ENCODE measurements at regions of chr16 and their contacts with region 1.

Region 1: DNA sequence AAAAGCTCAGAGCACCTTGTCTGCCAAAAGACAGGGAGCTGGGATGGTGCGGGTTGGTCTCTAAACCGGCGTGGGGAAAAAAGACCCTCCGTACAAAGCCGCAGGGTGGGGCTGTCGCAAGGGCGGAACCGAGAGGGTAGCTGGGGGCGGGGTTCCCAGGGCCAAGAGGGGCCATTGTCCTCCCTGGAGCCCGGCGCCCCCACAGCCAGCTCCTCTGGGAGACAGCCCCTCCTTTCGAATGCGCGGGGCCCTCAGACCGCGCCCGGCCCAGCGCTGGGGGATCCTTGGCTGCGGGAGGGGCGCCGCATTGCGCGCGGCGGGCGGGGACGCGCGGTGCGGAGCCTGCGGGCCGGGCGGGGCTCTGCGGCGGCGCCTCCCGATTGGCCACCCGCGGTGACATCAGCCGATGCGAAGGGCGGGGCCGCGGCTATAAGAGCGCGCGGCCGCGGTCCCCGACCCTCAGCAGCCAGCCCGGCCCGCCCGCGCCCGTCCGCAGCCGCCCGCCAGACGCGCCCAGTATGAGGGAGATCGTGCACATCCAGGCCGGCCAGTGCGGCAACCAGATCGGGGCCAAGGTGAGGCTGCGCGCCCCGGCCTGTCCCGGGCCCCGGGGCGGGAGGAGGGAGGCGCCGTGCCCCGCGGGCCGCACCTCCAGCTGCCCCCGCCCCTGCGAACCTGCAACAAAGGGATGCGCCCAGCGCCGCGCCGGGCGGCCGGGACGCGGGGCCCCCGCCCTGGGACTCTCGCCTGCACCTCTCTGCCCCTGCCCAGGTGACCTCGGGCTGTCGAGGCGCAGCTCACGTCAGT is at the start of gene TUBB3:
- DNase-seq: peak; percentile 83
- H3K4me3 ChIP-seq: peak within 1 kb of the TSS; percentile 75 to 84 (median 79)
- H3K27ac ChIP-seq: peak within 1 kb of the TSS; percentile 99
- H3K4me1 ChIP-seq: peaks cover 34% of the 10 kb centered on the region
- H3K27me3 ChIP-seq: no peaks in the 10 kb centered on the region
- CTCF ChIP-seq: no peak
- POLR2A ChIP-seq: peak; percentile 99
- total RNA-seq, gene TUBB3: 164 and 215 TPM in 2 replicates

Region 2: DNA sequence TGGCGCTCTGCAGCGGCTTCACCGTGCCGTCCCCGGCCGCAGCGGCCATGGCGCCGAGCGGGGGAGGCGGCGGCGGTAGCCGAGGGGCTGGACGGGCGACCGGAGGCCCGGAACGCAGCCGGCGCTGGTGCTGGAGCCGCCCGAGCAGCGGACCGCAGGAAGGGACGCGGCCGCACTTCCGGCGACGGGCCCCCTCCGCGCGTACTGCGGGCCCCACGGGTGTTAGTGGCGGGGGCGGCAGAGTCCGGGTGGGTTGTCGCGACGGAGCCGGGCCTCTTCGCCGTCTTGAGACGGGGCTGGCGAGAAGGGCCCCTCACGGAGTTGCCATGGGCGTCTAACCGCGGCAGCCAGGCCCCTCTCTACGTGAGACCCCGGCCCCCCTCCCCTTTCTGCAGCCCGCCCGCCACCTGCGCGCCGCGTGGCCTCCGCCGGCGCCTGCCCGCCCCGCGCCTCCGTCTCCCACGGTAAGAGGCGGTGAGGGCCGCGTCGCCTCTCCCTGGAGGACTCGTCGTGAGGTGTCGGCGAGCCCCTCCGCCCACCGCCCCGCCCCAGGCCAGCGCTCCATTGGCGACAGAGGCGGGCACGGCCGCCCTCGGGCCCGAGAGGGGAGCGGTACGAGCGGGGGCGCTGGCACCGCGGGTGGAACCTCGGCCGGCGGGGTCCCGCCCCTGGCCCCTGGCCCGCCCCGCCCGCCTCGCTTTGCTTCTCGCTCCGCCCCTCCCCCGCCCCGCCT is 202.1 kb before region 1 on chr16 and contains the starts of genes VPS9D1 and ZNF276:
- CTCF ChIA-PET with region 1: no interaction called
- POLR2A ChIA-PET with region 1: no interaction called
- dilution Hi-C with region 1: no loop called
- intact Hi-C with region 1: loop called (anchors 5 kb)
- DNase-seq: peak; percentile 79
- H3K4me3 ChIP-seq: peak within 1 kb of the TSS; percentile 57 to 76 (median 63)
- H3K27ac ChIP-seq: peak within 1 kb of the TSS; percentile 95
- H3K4me1 ChIP-seq: peaks cover 36% of the 10 kb centered on the region
- H3K27me3 ChIP-seq: no peaks in the 10 kb centered on the region
- CTCF ChIP-seq: no peak
- POLR2A ChIP-seq: peak; percentile 80
- total RNA-seq, gene VPS9D1: 15.5 and 18.3 TPM in 2 replicates
- total RNA-seq, gene ZNF276: 36.6 and 42.7 TPM in 2 replicates

Region 3: DNA sequence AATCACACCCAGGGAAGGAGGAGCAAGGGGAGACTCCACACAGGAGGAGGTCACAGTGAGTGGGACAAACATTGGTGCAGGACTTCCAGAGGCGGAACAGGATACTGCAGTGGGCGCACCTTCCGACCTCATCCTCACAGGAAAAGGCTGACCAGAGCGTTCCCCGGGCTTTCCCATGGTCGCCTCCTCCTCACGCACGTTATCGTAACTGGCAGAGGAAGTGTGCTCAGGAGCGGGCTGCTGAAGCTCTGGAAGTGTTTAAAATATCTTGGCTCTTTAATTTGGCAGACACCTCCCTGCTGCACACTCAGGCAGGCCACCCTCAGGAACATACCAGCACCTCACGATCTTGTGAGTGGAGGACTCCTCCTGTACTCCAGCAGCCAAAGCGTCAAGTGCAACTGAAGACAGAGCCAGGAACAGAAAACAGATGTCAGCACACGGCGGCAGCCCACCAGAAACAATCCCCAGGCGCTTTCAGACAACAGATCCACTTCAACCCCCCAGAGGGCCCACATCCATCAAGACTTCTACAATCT is 124.2 kb before region 1 on chr16:
- CTCF ChIA-PET with region 1: no interaction called
- POLR2A ChIA-PET with region 1: no interaction called
- dilution Hi-C with region 1: no loop called
- intact Hi-C with region 1: no loop called
- DNase-seq: peak; percentile 24
- H3K4me3 ChIP-seq: no peak overlapping the region
- H3K27ac ChIP-seq: no peak overlapping the region
- H3K4me1 ChIP-seq: no peaks in the 10 kb centered on the region
- H3K27me3 ChIP-seq: no peaks in the 10 kb centered on the region
- CTCF ChIP-seq: no peak
- POLR2A ChIP-seq: no peak

Region 4: GRCh38 chr16:89873972-89874689 is 49.0 kb before region 1 on chr16:
- CTCF ChIA-PET with region 1: no interaction called
- POLR2A ChIA-PET with region 1: interaction called, 6 read pairs
- dilution Hi-C with region 1: no loop called
- intact Hi-C with region 1: loop called (anchors 1 kb)
- DNase-seq: peak; percentile 96
- H3K4me3 ChIP-seq: peak overlapping the region; percentile 76 to 85 (median 76)
- H3K27ac ChIP-seq: no peak overlapping the region
- H3K4me1 ChIP-seq: peaks cover 8% of the 10 kb centered on the region
- H3K27me3 ChIP-seq: no peaks in the 10 kb centered on the region
- CTCF ChIP-seq: no peak
- POLR2A ChIP-seq: no peak

Region 5: DNA sequence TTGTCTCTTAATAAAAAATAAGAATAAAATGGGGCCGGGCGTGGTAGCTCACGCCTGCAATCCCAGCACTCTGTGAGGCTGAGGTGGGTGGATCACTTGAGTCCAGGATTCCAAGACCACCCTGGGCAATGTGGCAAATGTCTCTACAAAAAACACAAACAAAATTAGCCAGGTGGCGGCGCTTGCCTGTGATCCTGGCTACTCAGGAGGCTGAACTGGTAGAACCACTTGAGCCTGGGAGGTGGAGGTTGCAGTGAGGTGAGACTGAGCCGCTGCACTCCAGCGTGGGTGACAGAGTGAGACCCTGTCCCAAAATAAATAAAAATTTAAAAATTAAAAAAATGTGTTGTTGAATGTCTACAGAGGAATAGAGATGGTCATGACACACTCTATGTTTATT is 22.6 kb after region 1 on chr16:
- CTCF ChIA-PET with region 1: interaction called, 8 read pairs
- POLR2A ChIA-PET with region 1: interaction called, 5 read pairs
- dilution Hi-C with region 1: no loop called
- intact Hi-C with region 1: loop called (anchors 1 kb)
- DNase-seq: no peak
- H3K4me3 ChIP-seq: no peak overlapping the region
- H3K27ac ChIP-seq: no peak overlapping the region
- H3K4me1 ChIP-seq: peaks cover 4% of the 10 kb centered on the region
- H3K27me3 ChIP-seq: peaks cover 0 to 4% of the 10 kb centered on the region in 2 experiments
- CTCF ChIP-seq: no peak
- POLR2A ChIP-seq: no peak

Region 6: DNA sequence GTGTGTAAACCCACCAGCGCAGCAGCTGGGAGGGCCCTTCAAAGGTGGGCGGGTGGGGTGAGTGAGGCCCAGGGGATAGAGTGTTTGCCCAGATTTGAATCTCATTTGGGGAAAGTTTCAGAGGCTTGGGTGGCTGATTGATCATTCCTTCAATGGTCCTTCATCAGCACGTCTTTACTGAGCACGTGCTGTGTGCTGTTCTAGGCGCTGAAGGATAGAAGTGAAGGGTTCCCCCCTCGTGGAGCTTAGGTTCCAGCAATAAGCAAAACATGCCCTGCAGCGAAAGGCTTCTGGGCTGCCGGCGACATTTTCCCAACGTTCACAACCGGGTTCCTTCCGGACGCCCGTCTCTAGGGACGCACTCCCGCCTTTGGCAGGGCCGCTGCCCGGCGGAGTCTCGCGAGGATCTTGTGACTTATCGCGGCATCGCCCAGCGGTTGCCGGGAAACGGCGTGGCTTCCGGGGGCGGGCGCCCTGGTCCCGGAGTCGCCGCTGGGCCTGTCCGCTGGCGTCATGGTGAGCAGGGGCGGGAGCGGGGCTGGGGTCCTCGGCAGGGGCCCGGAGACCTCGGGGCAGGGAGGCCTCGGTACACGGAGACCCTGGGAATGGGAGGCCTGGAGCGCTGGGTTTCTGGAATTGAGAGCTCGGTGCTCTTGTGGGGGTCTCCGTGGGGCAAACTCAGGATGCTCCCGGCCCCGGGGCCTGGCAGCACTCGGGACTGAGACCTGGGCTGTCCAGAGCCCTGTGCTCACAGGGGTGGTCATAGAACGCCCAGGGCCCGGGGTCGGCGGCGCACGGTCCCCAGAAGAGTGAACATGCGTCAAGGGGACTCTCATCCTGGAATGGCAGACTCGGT is 99.3 kb after region 1 on chr16:
- CTCF ChIA-PET with region 1: interaction called, 7 read pairs
- POLR2A ChIA-PET with region 1: interaction called, 3 read pairs
- dilution Hi-C with region 1: no loop called
- intact Hi-C with region 1: loop called (anchors 2 kb)
- DNase-seq: peak; percentile 93
- H3K4me3 ChIP-seq: peak overlapping the region; percentile 42 to 64 (median 57)
- H3K27ac ChIP-seq: peak overlapping the region; percentile 48
- H3K4me1 ChIP-seq: peaks cover 18% of the 10 kb centered on the region
- H3K27me3 ChIP-seq: no peaks in the 10 kb centered on the region
- CTCF ChIP-seq: no peak
- POLR2A ChIP-seq: peak; percentile 81

Region 7: DNA sequence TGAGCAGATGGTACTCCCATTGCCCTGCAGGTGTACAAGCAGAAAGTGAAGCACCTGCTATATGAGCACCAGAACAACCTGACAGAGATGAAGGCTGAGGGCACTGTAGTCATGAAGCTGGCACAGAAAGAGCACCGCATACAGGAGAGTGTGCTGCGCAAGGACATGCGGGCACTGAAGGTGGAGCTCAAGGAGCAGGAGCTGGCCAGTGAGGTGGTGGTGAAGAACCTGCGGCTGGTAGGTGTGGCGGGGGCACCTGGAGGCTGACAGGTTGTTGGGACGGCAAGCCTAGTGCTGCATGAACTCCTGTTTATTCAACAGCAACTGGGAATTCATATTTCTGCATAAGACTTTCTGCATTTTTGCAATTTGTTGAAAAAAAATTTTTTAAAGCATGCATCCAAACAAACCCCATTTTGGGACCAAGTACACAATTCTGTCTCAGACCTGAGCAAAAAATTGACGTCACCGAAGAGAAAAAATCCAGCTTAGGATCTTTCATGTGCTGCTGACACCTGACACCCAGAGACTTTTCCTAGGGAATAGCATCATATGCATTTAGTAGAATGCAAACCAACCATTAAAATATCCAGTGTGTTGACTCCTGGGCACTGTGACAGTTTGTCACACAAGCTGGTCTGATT is 109.7 kb after region 1 on chr16:
- CTCF ChIA-PET with region 1: no interaction called
- POLR2A ChIA-PET with region 1: no interaction called
- dilution Hi-C with region 1: no loop called
- intact Hi-C with region 1: no loop called
- DNase-seq: no peak
- H3K4me3 ChIP-seq: no peak overlapping the region
- H3K27ac ChIP-seq: no peak overlapping the region
- H3K4me1 ChIP-seq: no peaks in the 10 kb centered on the region
- H3K27me3 ChIP-seq: no peaks in the 10 kb centered on the region
- CTCF ChIP-seq: no peak
- POLR2A ChIP-seq: no peak